Heart left ventricle (tissue), 16 donors: ENCODE measurements at regions of chr12 and their contacts with region 1.

Region 1: GRCh38 chr12:96208801-96209549 is 14.8 kb downstream of the ELK3 start:
- DNase-seq: no peak
- ATAC-seq: peak; percentile 44 to 81 (median 63)
- H3K4me3 ChIP-seq: peak overlapping the region in 2 of 12 donors; percentile 11 to 14
- H3K27ac ChIP-seq: peak overlapping the region in 10 of 12 donors; percentile 16 to 81 (median 72)
- H3K4me1 ChIP-seq: peaks cover 0 to 96% (median 63%) of the 10 kb centered on the region in 12 donors
- H3K27me3 ChIP-seq: no peaks in the 10 kb centered on the region
- CTCF ChIP-seq: peak in 9 of 12 donors; percentile 10 to 45 (median 36)
- POLR2A ChIP-seq: no peak

Region 2: GRCh38 chr12:96078231-96079135 is 130.5 kb before region 1 on chr12:
- intact Hi-C with region 1: loop called in 1 of 10 experiments (anchors 5 kb)
- DNase-seq: peak; percentile 74 to 85 (median 83)
- ATAC-seq: peak; percentile 76 to 95 (median 90)
- H3K4me3 ChIP-seq: peak overlapping the region in 2 of 12 donors; percentile 10 to 13
- H3K27ac ChIP-seq: peak overlapping the region in 11 of 12 donors; percentile 18 to 83 (median 50)
- H3K4me1 ChIP-seq: peaks cover 0 to 35% (median 16%) of the 10 kb centered on the region in 12 donors
- H3K27me3 ChIP-seq: peaks cover 0 to 4% (median 0%) of the 10 kb centered on the region in 9 donors
- CTCF ChIP-seq: no peak
- POLR2A ChIP-seq: no peak

Region 3: DNA sequence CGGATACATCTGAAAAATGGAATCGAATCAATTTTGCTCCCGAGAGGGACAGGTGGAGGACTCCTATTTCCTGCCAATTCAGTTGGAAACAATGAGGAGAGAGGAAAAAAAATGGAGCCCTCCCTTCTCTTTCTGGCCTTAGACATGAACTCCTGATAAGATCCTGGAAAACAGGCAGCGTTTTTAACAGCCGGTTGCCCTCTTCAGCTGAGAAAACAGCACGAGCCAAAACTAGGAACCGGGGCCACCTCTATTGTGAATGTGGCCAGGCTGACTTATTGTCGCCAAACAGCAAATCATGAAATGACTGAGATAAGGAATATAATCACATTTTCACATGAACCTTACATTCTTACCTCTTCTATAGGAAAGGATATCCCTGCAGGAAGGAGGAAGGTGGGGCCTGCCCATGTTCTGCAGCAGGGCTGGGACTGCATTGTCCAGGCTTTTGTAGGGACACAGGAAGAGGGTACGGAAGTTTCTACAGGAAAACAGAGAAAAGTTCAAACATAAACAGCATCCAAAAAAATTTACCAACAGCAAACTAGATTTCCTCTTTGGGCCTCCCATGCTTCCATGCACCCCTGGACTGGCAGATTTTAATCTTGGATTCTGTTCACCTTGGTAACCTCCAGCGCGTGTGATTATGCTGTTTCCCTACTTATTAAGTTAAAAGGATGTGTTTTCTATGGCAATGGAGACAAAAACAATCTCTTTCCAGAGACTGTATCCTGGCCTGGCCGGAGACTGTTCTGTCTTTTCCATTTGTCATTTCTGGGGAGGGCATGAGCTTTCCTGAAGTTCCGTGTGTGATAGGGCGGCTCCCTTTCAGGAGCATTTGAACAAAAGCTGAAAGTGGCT is 43.8 kb before region 1 on chr12:
- intact Hi-C with region 1: loop called in 5 of 10 experiments (anchors 1 to 5 kb)
- DNase-seq: peak in 4 of 5 donors; percentile 45 to 63 (median 54)
- ATAC-seq: peak; percentile 75 to 87 (median 77)
- H3K4me3 ChIP-seq: no peak overlapping the region
- H3K27ac ChIP-seq: peak overlapping the region; percentile 47 to 95 (median 82)
- H3K4me1 ChIP-seq: peaks cover 0 to 49% (median 20%) of the 10 kb centered on the region in 12 donors
- H3K27me3 ChIP-seq: no peaks in the 10 kb centered on the region
- CTCF ChIP-seq: no peak
- POLR2A ChIP-seq: no peak

Region 4: DNA sequence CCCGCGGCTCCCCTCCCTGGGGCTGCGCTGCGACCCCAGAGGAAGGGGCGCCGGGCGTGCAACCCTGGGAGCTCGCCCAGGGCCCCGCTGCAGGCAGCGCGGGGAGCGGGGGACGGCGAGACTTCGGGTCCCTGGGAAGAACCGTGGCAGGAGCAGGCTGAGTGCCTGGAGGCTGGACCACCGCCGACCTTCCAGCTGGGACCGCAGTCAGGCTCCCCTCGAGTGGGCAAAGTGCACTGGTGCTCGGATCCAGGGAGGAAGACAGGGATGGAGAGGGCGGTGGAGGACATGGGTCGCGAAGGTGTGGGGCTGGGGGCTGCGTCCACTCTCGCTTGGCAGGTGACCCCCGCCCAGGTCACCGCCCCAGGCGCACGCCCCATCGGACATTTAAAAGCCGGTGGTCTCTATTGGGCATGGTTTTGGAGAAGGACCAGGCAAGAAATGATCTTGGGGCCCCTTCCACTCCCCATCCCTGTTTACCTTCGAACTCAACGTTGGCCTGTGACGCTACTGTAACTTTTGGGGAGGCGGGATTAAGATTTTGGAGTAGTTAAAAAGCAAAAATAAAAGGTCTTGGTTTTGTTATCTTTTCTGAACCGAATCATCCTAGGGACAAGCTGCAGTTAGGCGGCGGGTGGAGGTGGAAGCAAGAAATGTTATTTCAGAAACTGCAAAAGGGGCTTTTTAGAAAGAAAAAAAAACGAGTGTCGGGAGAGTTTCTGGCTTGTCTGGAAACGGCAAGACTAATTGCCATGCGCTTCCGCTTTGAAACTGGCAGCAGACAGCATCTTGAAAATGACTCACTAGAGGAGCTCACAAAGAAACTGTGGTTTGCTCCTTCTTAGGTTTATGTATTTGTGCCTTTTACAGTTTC is 13.8 kb before region 1 on chr12:
- intact Hi-C with region 1: loop called in 2 of 10 experiments (anchors 2 kb)
- DNase-seq: peak; percentile 32 to 67 (median 46)
- ATAC-seq: peak in 2 of 4 donors; percentile 52 to 56
- H3K4me3 ChIP-seq: peak overlapping the region; percentile 58 to 98 (median 78)
- H3K27ac ChIP-seq: peak overlapping the region; percentile 74 to 95 (median 88)
- H3K4me1 ChIP-seq: peaks cover 3 to 58% (median 15%) of the 10 kb centered on the region in 12 donors
- H3K27me3 ChIP-seq: no peaks in the 10 kb centered on the region
- CTCF ChIP-seq: no peak
- POLR2A ChIP-seq: no peak

Region 5: GRCh38 chr12:96258104-96258961 is 49.4 kb after region 1 on chr12:
- intact Hi-C with region 1: no loop called
- DNase-seq: peak; percentile 74 to 88 (median 80)
- ATAC-seq: peak; percentile 33 to 66 (median 42)
- H3K4me3 ChIP-seq: no peak overlapping the region
- H3K27ac ChIP-seq: peak overlapping the region in 11 of 12 donors; percentile 27 to 83 (median 50)
- H3K4me1 ChIP-seq: peaks cover 0 to 69% (median 53%) of the 10 kb centered on the region in 12 donors
- H3K27me3 ChIP-seq: no peaks in the 10 kb centered on the region
- CTCF ChIP-seq: no peak
- POLR2A ChIP-seq: no peak

Region 6: DNA sequence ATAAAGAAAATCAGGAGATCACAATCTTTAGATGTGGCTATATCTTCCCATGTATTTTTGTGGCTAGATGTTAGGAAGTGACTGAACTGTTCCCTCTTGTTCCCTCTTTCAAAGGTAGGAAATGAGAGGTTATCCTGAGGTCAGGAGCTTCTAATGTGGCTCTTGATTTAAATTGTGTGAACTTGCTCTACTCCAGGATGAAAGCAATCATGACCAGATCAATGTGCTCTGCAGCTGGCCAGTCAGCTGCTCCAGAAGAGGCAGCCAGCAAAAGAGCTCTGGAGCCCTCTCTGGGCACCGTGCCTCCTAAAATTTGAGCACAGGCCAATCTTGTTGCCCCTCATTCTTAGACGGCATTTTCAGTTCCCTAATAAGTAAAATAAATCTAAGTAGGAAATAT is 159.3 kb after region 1 on chr12:
- intact Hi-C with region 1: no loop called
- DNase-seq: peak in 2 of 5 donors; percentile 37 to 52
- ATAC-seq: peak; percentile 56 to 71 (median 60)
- H3K4me3 ChIP-seq: no peak overlapping the region
- H3K27ac ChIP-seq: peak overlapping the region in 6 of 12 donors; percentile 13 to 55 (median 36)
- H3K4me1 ChIP-seq: peaks cover 7 to 81% (median 65%) of the 10 kb centered on the region in 12 donors
- H3K27me3 ChIP-seq: no peaks in the 10 kb centered on the region
- CTCF ChIP-seq: no peak
- POLR2A ChIP-seq: no peak